Calu3 (cell line): ENCODE measurements at regions of chr11 and their contacts with region 1.

Region 1: GRCh38 chr11:74388678-74389327 is 9.4 kb downstream of the PGM2L1 start:
- DNase-seq: peak; percentile 70
- H3K4me3 Mint-ChIP-seq: no peak overlapping the region
- H3K27ac Mint-ChIP-seq: no peak overlapping the region
- H3K4me1 Mint-ChIP-seq: peaks cover 13% of the 10 kb centered on the region
- H3K27me3 Mint-ChIP-seq: no peaks in the 10 kb centered on the region
- CTCF ChIP-seq: peak; percentile 59

Region 2: GRCh38 chr11:74443071-74443864 is 54.5 kb after region 1 on chr11:
- CTCF ChIA-PET with region 1: interaction called, 14 read pairs
- intact Hi-C with region 1: no loop called
- DNase-seq: peak; percentile 44
- H3K4me3 Mint-ChIP-seq: no peak overlapping the region
- H3K27ac Mint-ChIP-seq: no peak overlapping the region
- H3K4me1 Mint-ChIP-seq: peaks cover 10% of the 10 kb centered on the region
- H3K27me3 Mint-ChIP-seq: no peaks in the 10 kb centered on the region
- CTCF ChIP-seq: no peak

Region 3: DNA sequence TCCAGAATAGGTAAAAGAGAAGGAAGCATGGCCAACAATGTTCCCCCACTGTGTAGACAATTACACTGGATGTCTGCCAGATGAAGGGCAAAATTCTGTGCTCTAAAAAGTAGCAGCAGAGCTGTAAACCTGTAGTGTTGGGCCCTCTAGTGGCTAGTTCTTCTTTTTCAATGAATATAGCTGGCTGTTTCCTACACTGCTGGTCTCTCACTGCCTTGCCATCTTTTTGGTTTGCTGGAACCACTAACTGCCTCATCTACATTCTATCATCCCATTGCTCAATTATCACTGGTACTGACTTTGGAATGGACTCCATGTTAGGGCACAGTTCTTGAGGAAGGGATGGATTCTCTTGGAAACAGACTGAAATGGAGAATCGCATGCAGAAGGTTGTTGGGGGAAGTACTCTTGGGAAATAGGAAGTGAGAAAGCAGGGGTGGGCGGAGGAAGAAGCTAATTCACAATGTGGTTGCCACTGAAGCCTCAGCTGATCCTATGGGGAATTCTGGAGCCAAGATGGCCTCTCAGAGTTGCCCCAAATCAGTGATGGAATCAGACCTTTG is 60.6 kb after region 1 on chr11:
- CTCF ChIA-PET with region 1: interaction called, 38 read pairs
- intact Hi-C with region 1: loop called (anchors 1 kb)
- DNase-seq: peak; percentile 60
- H3K4me3 Mint-ChIP-seq: no peak overlapping the region
- H3K27ac Mint-ChIP-seq: no peak overlapping the region
- H3K4me1 Mint-ChIP-seq: peaks cover 9% of the 10 kb centered on the region
- H3K27me3 Mint-ChIP-seq: no peaks in the 10 kb centered on the region
- CTCF ChIP-seq: peak; percentile 62